WTC11 (cell line): ENCODE measurements at regions of chr22 and their contacts with region 1.

Region 1: GRCh38 chr22:24926849-24927579 is 19.5 kb downstream of the LHFPL7 start:
- DNase-seq: no peak
- ATAC-seq: no peak
- H3K4me3 Mint-ChIP-seq: no peak overlapping the region
- H3K27ac Mint-ChIP-seq: no peak overlapping the region
- H3K4me1 Mint-ChIP-seq: peaks cover 13% of the 10 kb centered on the region
- H3K27me3 Mint-ChIP-seq: no peaks in the 10 kb centered on the region; the same call in 1 of the 2 replicates
- CTCF ChIP-seq: no peak

Region 2: DNA sequence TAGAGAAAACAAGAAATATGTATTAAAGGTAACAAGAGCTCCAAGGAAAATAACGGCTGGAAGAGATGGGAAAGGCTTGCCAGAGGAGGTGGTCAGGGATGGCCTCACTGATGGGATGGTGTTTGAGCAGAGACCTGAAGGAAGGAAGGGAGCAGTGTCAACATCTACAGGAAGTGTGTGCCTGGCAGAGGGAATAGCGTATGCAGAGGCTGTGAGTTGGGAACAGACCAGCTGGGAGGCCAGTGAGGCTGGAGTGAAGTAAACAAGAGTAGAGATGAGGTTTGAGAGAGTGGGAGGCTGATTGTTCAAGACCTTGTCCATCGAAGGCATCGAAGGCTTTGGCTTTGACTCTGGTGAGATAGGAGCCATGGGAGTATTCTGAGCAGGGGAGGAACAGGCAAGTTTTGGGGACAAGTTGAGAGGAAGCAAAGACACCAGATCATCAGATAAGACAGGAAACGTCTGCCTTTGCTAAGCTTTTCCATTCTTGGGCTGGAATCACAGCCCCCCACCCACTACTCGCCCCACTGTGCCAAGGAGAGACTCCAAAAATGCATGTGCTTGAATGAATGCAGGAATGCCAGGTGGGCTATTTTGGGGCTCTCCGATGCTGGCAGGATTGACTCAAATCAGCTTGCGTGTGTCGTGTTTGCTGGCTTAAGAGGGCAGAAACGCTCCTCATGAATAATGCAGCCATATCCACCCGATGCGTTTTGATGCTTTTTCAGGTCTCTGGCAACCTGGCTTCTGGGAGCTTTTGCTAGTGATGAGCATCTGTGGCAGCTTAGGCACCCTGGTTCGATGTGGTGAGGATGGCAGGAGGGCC is 113.9 kb before region 1 on chr22:
- CTCF ChIA-PET with region 1: no interaction called
- POLR2A ChIA-PET with region 1: no interaction called
- DNase-seq: no peak
- ATAC-seq: no peak
- H3K4me3 Mint-ChIP-seq: no peak overlapping the region
- H3K27ac Mint-ChIP-seq: no peak overlapping the region
- H3K4me1 Mint-ChIP-seq: peaks cover 9% of the 10 kb centered on the region
- H3K27me3 Mint-ChIP-seq: no peaks in the 10 kb centered on the region
- CTCF ChIP-seq: no peak

Region 3: DNA sequence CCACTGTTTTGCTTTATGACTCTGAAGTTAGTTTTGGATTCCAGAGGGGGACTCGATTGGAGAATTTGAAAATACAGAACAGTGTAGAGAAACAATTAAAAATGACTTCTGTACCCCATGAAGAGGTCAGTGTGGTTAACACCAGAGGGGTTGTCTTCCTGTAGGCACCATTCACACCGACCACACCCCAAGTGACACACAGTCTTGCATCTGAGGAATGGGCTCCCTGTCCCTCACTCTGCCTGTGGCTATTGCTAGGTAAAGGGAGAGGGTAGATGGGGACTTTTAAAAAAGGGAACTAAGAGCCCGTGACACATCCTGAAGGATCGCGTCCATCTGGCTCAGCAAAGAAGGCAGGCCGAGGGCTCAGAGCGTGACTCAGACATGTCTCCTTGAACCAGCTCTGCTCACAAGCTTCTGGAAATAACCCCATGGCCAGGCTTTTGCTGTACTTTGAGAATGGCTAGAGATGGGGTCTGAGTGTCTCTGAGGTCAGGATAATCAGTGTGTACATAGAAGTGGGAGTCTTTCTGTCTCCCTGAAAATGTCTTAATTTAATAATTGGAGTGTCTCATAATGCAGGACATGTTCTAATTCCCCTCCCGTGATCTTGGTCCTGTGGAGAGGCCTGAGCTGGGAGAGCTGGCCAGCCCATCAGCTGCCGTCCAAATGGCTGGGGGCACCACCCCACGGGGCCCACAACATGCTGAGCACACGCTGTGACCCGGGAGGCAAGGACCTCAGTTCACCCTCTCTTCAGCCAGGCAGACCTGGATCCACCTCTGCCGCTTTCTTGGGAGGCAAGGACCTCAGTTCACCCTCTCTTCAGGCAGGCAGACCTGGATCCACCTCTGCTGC is 81.7 kb before region 1 on chr22:
- CTCF ChIA-PET with region 1: interaction called, 11 read pairs
- POLR2A ChIA-PET with region 1: no interaction called
- DNase-seq: no peak
- ATAC-seq: no peak
- H3K4me3 Mint-ChIP-seq: no peak overlapping the region
- H3K27ac Mint-ChIP-seq: no peak overlapping the region
- H3K4me1 Mint-ChIP-seq: peaks cover 2% of the 10 kb centered on the region; the same call in 1 of the 2 replicates
- H3K27me3 Mint-ChIP-seq: no peaks in the 10 kb centered on the region; the same call in 1 of the 2 replicates
- CTCF ChIP-seq: no peak

Region 4: GRCh38 chr22:24867323-24868022 is 59.5 kb before region 1 on chr22:
- CTCF ChIA-PET with region 1: no interaction called
- POLR2A ChIA-PET with region 1: no interaction called
- DNase-seq: no peak
- ATAC-seq: no peak
- H3K4me3 Mint-ChIP-seq: no peak overlapping the region
- H3K27ac Mint-ChIP-seq: no peak overlapping the region
- H3K4me1 Mint-ChIP-seq: no peaks in the 10 kb centered on the region
- H3K27me3 Mint-ChIP-seq: no peaks in the 10 kb centered on the region; the same call in 1 of the 2 replicates
- CTCF ChIP-seq: no peak

Region 5: GRCh38 chr22:24894220-24894975 is 32.6 kb before region 1 on chr22:
- CTCF ChIA-PET with region 1: interaction called, 11 read pairs
- POLR2A ChIA-PET with region 1: no interaction called
- DNase-seq: no peak
- ATAC-seq: peak; percentile 28
- H3K4me3 Mint-ChIP-seq: no peak overlapping the region
- H3K27ac Mint-ChIP-seq: peak overlapping the region; percentile 66
- H3K4me1 Mint-ChIP-seq: peaks cover 17% of the 10 kb centered on the region
- H3K27me3 Mint-ChIP-seq: no peaks in the 10 kb centered on the region; the same call in 1 of the 2 replicates
- CTCF ChIP-seq: no peak

Region 6: GRCh38 chr22:25057013-25057881 is 130.2 kb after region 1 on chr22:
- CTCF ChIA-PET with region 1: interaction called, 14 read pairs
- POLR2A ChIA-PET with region 1: no interaction called
- DNase-seq: peak; percentile 95
- ATAC-seq: peak; percentile 96
- H3K4me3 Mint-ChIP-seq: no peak overlapping the region
- H3K27ac Mint-ChIP-seq: peak overlapping the region; percentile 81; the same call in 1 of the 2 replicates
- H3K4me1 Mint-ChIP-seq: peaks cover 22% of the 10 kb centered on the region
- H3K27me3 Mint-ChIP-seq: no peaks in the 10 kb centered on the region
- CTCF ChIP-seq: peak; percentile 83